Activated CD8-positive, alpha-beta T cell treated with anti-CD3 and anti-CD28 coated beads for 36 hours (primary cell): ENCODE measurements at regions of chr4 and their contacts with region 1.

Region 1: GRCh38 chr4:77203380-77204197 is 46.6 kb downstream of the CCNG2 start:
- DNase-seq: peak; percentile 82
- ATAC-seq: peak; percentile 70
- H3K4me3 Mint-ChIP-seq: no peak overlapping the region
- H3K27ac Mint-ChIP-seq: no peak overlapping the region
- H3K4me1 Mint-ChIP-seq: peaks cover 13% of the 10 kb centered on the region
- H3K27me3 Mint-ChIP-seq: peaks cover 5% of the 10 kb centered on the region
- CTCF ChIP-seq: peak; percentile 74

Region 2: GRCh38 chr4:76515975-76516843 is 687.4 kb before region 1 on chr4:
- CTCF ChIA-PET with region 1: interaction called, 3 read pairs
- POLR2A ChIA-PET with region 1: no interaction called
- intact Hi-C with region 1: loop called (anchors 10 kb)
- DNase-seq: no peak
- ATAC-seq: no peak
- H3K4me3 Mint-ChIP-seq: no peak overlapping the region
- H3K27ac Mint-ChIP-seq: no peak overlapping the region
- H3K4me1 Mint-ChIP-seq: no peaks in the 10 kb centered on the region
- H3K27me3 Mint-ChIP-seq: no peaks in the 10 kb centered on the region
- CTCF ChIP-seq: no peak

Region 3: GRCh38 chr4:77065382-77065781 is 138.2 kb before region 1 on chr4:
- CTCF ChIA-PET with region 1: interaction called, 26 read pairs
- POLR2A ChIA-PET with region 1: no interaction called
- intact Hi-C with region 1: loop called (anchors 5 kb)
- DNase-seq: no peak
- ATAC-seq: no peak
- H3K4me3 Mint-ChIP-seq: no peak overlapping the region
- H3K27ac Mint-ChIP-seq: peak overlapping the region; percentile 20
- H3K4me1 Mint-ChIP-seq: peaks cover 36% of the 10 kb centered on the region
- H3K27me3 Mint-ChIP-seq: no peaks in the 10 kb centered on the region
- CTCF ChIP-seq: no peak

Region 4: DNA sequence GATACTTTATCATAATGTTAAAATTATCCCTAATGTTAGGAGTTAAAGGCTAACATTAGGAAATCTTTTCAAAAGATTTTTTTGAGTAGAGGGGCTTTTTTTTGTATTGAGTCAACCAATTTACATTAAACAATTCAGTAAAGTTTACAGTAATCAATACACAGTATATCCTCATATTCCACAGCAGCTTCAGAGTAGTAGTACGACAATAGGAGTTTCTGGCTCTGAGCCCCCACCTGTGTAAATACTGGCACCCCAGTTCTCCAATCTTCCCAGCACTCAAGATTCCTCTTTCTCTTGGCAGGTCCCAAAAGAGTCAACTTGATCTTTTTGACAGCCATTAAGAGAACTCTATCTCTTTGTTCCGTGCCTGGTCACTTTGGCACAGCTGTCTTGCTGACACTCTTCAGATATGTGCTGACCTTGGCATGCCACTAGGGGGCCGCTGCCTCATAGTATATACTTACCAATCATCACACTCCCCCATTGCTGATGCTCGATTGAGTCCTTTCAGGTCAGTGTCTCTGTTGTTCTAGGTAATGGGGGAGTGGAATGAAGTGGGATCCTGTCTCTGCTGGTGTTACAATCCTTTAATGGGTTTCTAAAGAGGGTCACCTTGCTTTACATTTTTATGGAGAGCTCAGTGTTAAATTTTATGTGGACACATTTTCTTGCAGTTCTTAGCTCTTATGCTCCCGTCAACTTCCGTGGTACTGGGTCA is 108.3 kb before region 1 on chr4:
- CTCF ChIA-PET with region 1: interaction called, 183 read pairs
- POLR2A ChIA-PET with region 1: interaction called, 3 read pairs
- intact Hi-C with region 1: loop called (anchors 1 kb)
- DNase-seq: peak; percentile 89
- ATAC-seq: peak; percentile 100
- H3K4me3 Mint-ChIP-seq: no peak overlapping the region
- H3K27ac Mint-ChIP-seq: no peak overlapping the region
- H3K4me1 Mint-ChIP-seq: peaks cover 11% of the 10 kb centered on the region
- H3K27me3 Mint-ChIP-seq: no peaks in the 10 kb centered on the region
- CTCF ChIP-seq: peak; percentile 85

Region 5: GRCh38 chr4:77132652-77133312 is 70.8 kb before region 1 on chr4:
- CTCF ChIA-PET with region 1: interaction called, 22 read pairs
- POLR2A ChIA-PET with region 1: no interaction called
- intact Hi-C with region 1: no loop called
- DNase-seq: no peak
- ATAC-seq: no peak
- H3K4me3 Mint-ChIP-seq: no peak overlapping the region
- H3K27ac Mint-ChIP-seq: no peak overlapping the region
- H3K4me1 Mint-ChIP-seq: peaks cover 5% of the 10 kb centered on the region
- H3K27me3 Mint-ChIP-seq: no peaks in the 10 kb centered on the region
- CTCF ChIP-seq: no peak

Region 6: GRCh38 chr4:77185686-77186085 is 17.9 kb before region 1 on chr4:
- CTCF ChIA-PET with region 1: interaction called, 21 read pairs
- POLR2A ChIA-PET with region 1: no interaction called
- intact Hi-C with region 1: no loop called
- DNase-seq: no peak
- ATAC-seq: no peak
- H3K4me3 Mint-ChIP-seq: no peak overlapping the region
- H3K27ac Mint-ChIP-seq: no peak overlapping the region
- H3K4me1 Mint-ChIP-seq: no peaks in the 10 kb centered on the region
- H3K27me3 Mint-ChIP-seq: peaks cover 2% of the 10 kb centered on the region
- CTCF ChIP-seq: no peak